ENCODE measurements at regions of chr20 and their contacts with region 1.

Region 1: GRCh38 chr20:3767427-3768341 is at the start of gene ADISSP:
- DNase-seq: peak; percentile 97 to 98
- ATAC-seq: peak; percentile 91 to 92
- H3K4me3 ChIP-seq: peak within 1 kb of the TSS; percentile 66 to 94 (median 84)
- H3K27ac ChIP-seq: peak within 1 kb of the TSS; percentile 80 to 84 (median 80)
- H3K4me1 ChIP-seq: peaks cover 12 to 23% of the 10 kb centered on the region in 2 donors
- H3K27me3 ChIP-seq: no peaks in the 10 kb centered on the region
- CTCF ChIP-seq: no peak
- POLR2A ChIP-seq: peak; percentile 59 to 63
- total RNA-seq, gene ADISSP: 5.9 to 16.4 (median 9.6) TPM

Region 2: DNA sequence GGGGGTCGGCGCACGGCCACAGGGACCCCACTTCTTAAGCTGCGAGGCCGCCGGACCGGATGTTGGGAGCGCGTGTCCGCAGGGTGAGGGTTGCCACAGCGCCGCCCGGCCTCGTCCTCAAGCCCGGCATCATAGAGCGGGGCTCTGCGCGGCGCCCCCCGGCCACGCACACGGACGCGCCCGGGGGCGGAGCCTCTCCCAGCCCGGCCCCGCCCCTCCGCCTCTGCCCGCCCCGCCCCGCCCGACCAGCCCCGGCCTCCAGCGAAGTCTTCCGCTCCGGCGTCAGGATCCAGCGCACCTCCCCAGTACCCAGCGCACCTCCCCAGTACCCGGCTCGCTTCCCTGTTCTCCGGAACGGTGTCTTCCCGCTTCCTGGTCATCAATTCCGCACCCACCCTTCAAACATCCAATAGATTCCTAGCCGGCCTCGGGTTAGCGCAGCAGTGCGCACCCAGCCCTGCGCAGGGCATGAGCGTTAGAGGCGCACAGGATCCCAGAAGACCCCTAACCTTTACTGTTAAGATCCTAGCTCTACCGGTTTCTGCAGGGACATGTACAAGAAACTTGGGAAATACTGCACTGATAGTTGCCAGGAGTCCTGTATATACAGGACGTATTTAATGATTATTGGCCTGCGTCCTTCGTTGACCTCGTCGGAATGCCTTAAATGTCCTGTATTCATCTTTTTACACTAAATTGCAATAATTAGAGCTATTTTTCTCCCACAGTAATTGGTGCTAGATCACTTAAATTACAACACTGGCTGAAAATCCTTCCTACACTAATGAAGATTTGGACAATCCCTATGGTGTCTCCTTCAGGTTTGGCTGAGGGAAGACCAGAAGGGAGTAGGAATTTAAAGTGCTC is 359.7 kb before region 1 on chr20:
- in situ Hi-C with region 1: no loop called
- intact Hi-C with region 1: loop called (anchors 10 kb)
- DNase-seq: peak; percentile 28 to 54
- ATAC-seq: peak; percentile 67 to 74
- H3K4me3 ChIP-seq: peak overlapping the region; percentile 68 to 86 (median 78)
- H3K27ac ChIP-seq: peak overlapping the region; percentile 81 to 89 (median 83)
- H3K4me1 ChIP-seq: peaks cover 4 to 11% of the 10 kb centered on the region in 2 donors
- H3K27me3 ChIP-seq: no peaks in the 10 kb centered on the region
- CTCF ChIP-seq: no peak
- POLR2A ChIP-seq: peak; percentile 32 to 44

Region 3: GRCh38 chr20:3679749-3680700 is 87.7 kb before region 1 on chr20:
- in situ Hi-C with region 1: no loop called
- intact Hi-C with region 1: loop called (anchors 5 kb)
- DNase-seq: no peak
- ATAC-seq: no peak
- H3K4me3 ChIP-seq: peak overlapping the region in 1 of 4 donors; percentile 57
- H3K27ac ChIP-seq: peak overlapping the region; percentile 63 to 70 (median 66)
- H3K4me1 ChIP-seq: peaks cover 0 to 13% of the 10 kb centered on the region in 2 donors
- H3K27me3 ChIP-seq: peaks cover 5 to 23% (median 9%) of the 10 kb centered on the region in 3 donors
- CTCF ChIP-seq: no peak
- POLR2A ChIP-seq: no peak

Region 4: GRCh38 chr20:3710703-3711483 is 56.8 kb before region 1 on chr20:
- in situ Hi-C with region 1: no loop called
- intact Hi-C with region 1: loop called (anchors 2 kb)
- DNase-seq: peak; percentile 40 to 53
- ATAC-seq: no peak
- H3K4me3 ChIP-seq: peak overlapping the region in 1 of 4 donors; percentile 10
- H3K27ac ChIP-seq: peak overlapping the region in 1 of 4 donors; percentile 24
- H3K4me1 ChIP-seq: peaks cover 5 to 16% of the 10 kb centered on the region in 2 donors
- H3K27me3 ChIP-seq: no peaks in the 10 kb centered on the region
- CTCF ChIP-seq: peak; percentile 94 to 98 (median 97)
- POLR2A ChIP-seq: no peak

Region 5: GRCh38 chr20:3781153-3781910 is 13.6 kb after region 1 on chr20 and contains the start of gene SPEF1:
- in situ Hi-C with region 1: no loop called
- intact Hi-C with region 1: loop called (anchors 1 kb)
- DNase-seq: peak; percentile 69 to 83
- ATAC-seq: peak; percentile 92 to 98
- H3K4me3 ChIP-seq: peak within 1 kb of the TSS; percentile 53 to 73 (median 55)
- H3K27ac ChIP-seq: peak within 1 kb of the TSS; percentile 47 to 67 (median 59)
- H3K4me1 ChIP-seq: peaks cover 39 to 50% of the 10 kb centered on the region in 2 donors
- H3K27me3 ChIP-seq: peaks cover 0 to 10% (median 8%) of the 10 kb centered on the region in 3 donors
- CTCF ChIP-seq: peak; percentile 27 to 57 (median 36)
- POLR2A ChIP-seq: no peak
- total RNA-seq, gene SPEF1: not detected

Region 6: GRCh38 chr20:4091490-4092479 is 324.1 kb after region 1 on chr20:
- in situ Hi-C with region 1: loop called in 1 of 4 experiments (anchors 25 kb)
- intact Hi-C with region 1: no loop called
- DNase-seq: no peak
- ATAC-seq: peak in 1 of 2 donors; percentile 55
- H3K4me3 ChIP-seq: no peak overlapping the region
- H3K27ac ChIP-seq: no peak overlapping the region
- H3K4me1 ChIP-seq: no peaks in the 10 kb centered on the region
- H3K27me3 ChIP-seq: no peaks in the 10 kb centered on the region
- CTCF ChIP-seq: peak in 2 of 5 experiments; percentile 50 to 66
- POLR2A ChIP-seq: no peak

Measured in gastrocnemius medialis (tissue), 4 donors.